MCF 10A (cell line): ENCODE measurements at regions of chr2 and their contacts with region 1.

Region 1: GRCh38 chr2:169798718-169799592 is at the start of gene SSB:
- DNase-seq: peak; percentile 94
- H3K4me3 Mint-ChIP-seq: peak within 1 kb of the TSS; percentile 78
- H3K27ac Mint-ChIP-seq: peak within 1 kb of the TSS; percentile 65
- H3K4me1 Mint-ChIP-seq: peaks cover 13% of the 10 kb centered on the region
- H3K27me3 Mint-ChIP-seq: no peaks in the 10 kb centered on the region
- CTCF ChIP-seq: no peak
- total RNA-seq, gene SSB: 98.0 and 113 TPM in 2 replicates

Region 2: DNA sequence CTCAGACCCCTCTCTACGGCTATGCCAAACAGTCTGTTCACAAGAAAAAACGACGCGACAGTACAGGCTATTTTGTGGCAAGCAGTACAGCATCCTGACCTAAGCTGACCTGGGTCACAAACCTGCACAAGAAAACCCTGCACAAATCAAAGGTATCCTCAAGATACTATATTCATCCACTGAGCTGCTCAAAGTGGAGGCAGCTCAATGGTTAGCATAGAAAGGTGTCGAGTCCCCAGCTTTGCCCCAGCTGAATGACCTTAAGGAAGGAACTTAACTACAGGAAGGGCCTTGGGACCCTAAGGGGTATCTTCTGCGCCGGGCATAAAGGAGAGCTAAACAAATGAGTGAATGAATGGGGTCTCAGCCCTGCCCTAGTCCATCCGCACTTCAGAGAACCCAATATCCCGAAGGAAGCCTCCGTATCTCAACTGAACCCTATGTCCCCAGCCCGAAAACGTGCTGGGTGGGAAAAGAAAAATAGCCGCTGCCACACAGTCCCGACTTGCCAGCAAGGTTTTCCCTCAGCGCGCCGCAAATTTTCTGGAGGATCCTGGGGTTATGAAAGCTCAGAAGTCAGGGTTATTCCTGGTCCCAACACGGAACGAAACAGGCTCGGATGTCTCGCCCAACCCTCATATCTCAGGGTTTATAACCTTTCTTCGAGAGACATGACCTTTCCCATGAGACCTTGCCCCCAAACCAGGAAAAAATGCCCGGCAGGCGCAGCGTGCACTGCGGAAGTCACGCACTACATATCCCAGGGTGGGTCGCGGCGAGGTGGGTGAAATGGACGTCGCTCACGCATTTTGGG is 225.6 kb before region 1 on chr2 and contains the start of gene FASTKD1:
- CTCF ChIA-PET with region 1: no interaction called
- POLR2A ChIA-PET with region 1: interaction called, 11 read pairs
- intact Hi-C with region 1: no loop called
- DNase-seq: peak; percentile 95
- H3K4me3 Mint-ChIP-seq: peak within 1 kb of the TSS; percentile 96
- H3K27ac Mint-ChIP-seq: peak within 1 kb of the TSS; percentile 74
- H3K4me1 Mint-ChIP-seq: peaks cover 8% of the 10 kb centered on the region
- H3K27me3 Mint-ChIP-seq: no peaks in the 10 kb centered on the region
- CTCF ChIP-seq: no peak
- total RNA-seq, gene FASTKD1: 34.5 and 39.9 TPM in 2 replicates

Region 3: DNA sequence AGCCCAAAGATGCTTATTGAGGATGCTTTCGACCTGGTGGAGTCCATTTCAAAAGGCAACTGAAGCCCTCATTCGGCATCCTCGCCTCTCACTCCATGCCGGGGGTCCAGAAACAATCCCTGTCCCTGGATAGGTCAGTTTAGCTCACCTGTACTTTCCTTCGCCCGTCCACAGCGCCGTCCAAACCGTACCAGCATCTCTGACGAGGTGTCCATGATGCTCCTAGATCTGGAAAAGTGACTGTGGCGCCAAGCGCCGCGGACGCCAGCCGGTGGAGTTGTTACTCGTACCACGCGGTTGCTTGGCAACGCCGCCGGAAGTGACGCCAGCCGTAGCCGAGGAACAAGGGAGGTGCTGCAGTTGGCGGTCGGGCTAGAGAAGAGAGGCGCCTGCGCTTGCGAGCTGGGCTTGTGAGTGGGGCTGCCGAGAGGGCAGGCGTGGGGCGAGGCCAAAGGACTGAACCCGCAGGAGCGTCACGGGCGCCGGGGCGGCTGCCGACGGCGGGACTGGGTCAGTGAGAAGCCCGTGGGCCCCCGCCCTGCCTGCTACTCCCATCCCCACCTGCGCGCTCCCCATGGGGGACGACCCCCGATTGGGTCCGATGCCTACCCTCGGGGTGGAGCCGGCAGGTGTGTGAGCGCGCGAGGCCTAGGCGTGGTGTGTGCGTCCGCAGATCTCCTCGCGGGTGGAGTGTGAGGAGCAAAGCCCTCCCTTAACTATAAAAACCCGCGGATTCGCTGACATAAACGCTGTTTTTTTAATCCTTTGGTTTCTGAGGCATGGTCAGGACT is 104.6 kb before region 1 on chr2 and contains the starts of genes CFAP210 and PHOSPHO2:
- CTCF ChIA-PET with region 1: no interaction called
- POLR2A ChIA-PET with region 1: interaction called, 5 read pairs
- intact Hi-C with region 1: loop called (anchors 10 kb)
- DNase-seq: peak; percentile 95
- H3K4me3 Mint-ChIP-seq: peak within 1 kb of the TSS; percentile 84
- H3K27ac Mint-ChIP-seq: peak within 1 kb of the TSS; percentile 91
- H3K4me1 Mint-ChIP-seq: peaks cover 6% of the 10 kb centered on the region
- H3K27me3 Mint-ChIP-seq: peaks cover 16% of the 10 kb centered on the region
- CTCF ChIP-seq: no peak
- total RNA-seq, gene CFAP210: not detected in 2 replicates
- total RNA-seq, gene PHOSPHO2: 5.4 and 6.0 TPM in 2 replicates

Region 4: GRCh38 chr2:169815849-169816248 is 16.9 kb after region 1 on chr2:
- CTCF ChIA-PET with region 1: interaction called, 4 read pairs
- POLR2A ChIA-PET with region 1: interaction called, 10 read pairs
- intact Hi-C with region 1: no loop called
- DNase-seq: peak; percentile 58
- H3K4me3 Mint-ChIP-seq: no peak overlapping the region
- H3K27ac Mint-ChIP-seq: no peak overlapping the region
- H3K4me1 Mint-ChIP-seq: peaks cover 14% of the 10 kb centered on the region
- H3K27me3 Mint-ChIP-seq: no peaks in the 10 kb centered on the region
- CTCF ChIP-seq: no peak

Region 5: GRCh38 chr2:169824373-169825333 is 25.7 kb after region 1 on chr2 and contains the start of gene METTL5:
- CTCF ChIA-PET with region 1: interaction called, 5 read pairs
- POLR2A ChIA-PET with region 1: interaction called, 22 read pairs
- intact Hi-C with region 1: no loop called
- DNase-seq: peak; percentile 83
- H3K4me3 Mint-ChIP-seq: peak within 1 kb of the TSS; percentile 81
- H3K27ac Mint-ChIP-seq: peak within 1 kb of the TSS; percentile 89
- H3K4me1 Mint-ChIP-seq: peaks cover 38% of the 10 kb centered on the region
- H3K27me3 Mint-ChIP-seq: no peaks in the 10 kb centered on the region
- CTCF ChIP-seq: peak; percentile 99
- total RNA-seq, gene METTL5: 68.0 and 109 TPM in 2 replicates